GM23248 (cell line): ENCODE measurements at regions of chr18 and their contacts with region 1.

Region 1: DNA sequence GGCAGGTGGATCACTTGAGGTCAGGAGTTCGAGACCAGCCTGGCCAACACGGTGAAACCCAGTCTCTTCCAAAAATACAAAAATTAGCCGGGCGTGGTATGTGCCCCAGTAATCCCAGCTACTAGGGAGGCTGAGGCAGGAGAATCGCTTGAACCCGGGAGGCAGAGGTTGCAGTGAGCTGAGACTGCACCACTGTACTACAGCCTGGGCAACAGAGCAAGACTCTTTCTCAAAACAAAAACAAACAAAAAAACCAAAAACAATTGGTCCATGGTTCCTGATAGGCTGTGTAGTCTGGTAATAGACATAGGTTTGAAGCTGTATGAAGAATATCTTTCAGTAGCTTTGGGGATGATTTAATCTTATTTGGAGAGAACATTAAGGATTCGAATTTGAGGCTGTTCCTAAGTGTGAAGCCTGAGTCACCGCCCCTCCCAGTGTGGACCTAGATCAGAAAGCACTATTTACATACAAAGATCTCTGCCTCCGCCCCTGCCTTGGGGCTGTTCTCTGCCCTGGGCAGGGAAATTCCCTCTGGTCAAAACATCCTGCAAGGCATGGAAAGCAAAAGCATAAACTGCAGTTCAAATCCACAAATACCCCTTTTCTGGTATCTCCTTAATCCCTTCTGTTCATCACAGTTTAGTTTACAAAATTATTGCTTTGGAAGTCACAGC is 52.8 kb upstream of the PMAIP1 start:
- DNase-seq: peak; percentile 49
- H3K4me3 ChIP-seq: no peak overlapping the region
- H3K27ac ChIP-seq: no peak overlapping the region
- H3K4me1 ChIP-seq: peaks cover 4% of the 10 kb centered on the region; the same call in 1 of the 2 replicates
- H3K27me3 ChIP-seq: no peaks in the 10 kb centered on the region

Region 2: DNA sequence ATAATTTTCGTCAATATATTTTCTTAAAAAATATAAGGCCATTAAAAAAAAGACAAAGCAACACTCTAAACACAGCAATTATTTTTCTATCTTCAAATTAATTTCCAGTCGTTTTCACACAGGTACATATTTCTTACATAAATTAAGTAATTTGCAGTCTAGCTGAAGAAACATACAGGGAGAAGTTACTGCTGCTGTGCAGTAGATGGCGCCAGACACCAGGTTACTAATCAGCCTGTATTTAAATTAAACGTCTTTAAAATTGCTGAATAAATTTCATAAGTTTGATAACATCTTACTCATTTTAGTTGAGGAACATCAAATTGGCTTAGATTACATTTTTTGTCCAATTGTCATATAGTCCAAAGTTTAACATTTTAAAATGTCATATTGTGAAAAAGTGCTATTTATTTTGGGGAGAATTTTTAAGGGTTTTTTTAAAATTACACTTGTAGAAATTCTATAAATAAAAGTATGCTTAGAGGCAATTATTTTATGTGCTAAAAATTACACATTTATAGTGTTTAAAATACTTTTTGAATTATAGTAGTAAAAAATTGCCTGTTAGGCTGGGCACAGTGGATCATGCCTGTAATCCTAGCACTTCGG is 141.2 kb after region 1 on chr18:
- in situ Hi-C with region 1: loop called (anchors 10 kb)
- DNase-seq: peak; percentile 65
- H3K4me3 ChIP-seq: no peak overlapping the region
- H3K27ac ChIP-seq: no peak overlapping the region
- H3K4me1 ChIP-seq: no peaks in the 10 kb centered on the region
- H3K27me3 ChIP-seq: no peaks in the 10 kb centered on the region

Region 3: GRCh38 chr18:60421356-60422118 is 574.6 kb after region 1 on chr18:
- in situ Hi-C with region 1: no loop called
- DNase-seq: peak; percentile 1
- H3K4me3 ChIP-seq: no peak overlapping the region
- H3K27ac ChIP-seq: no peak overlapping the region
- H3K4me1 ChIP-seq: peaks cover 5% of the 10 kb centered on the region; the same call in 1 of the 2 replicates
- H3K27me3 ChIP-seq: no peaks in the 10 kb centered on the region

Region 4: GRCh38 chr18:60831971-60832370 is 985.0 kb after region 1 on chr18:
- in situ Hi-C with region 1: no loop called
- DNase-seq: no peak
- H3K4me3 ChIP-seq: no peak overlapping the region
- H3K27ac ChIP-seq: no peak overlapping the region
- H3K4me1 ChIP-seq: no peaks in the 10 kb centered on the region
- H3K27me3 ChIP-seq: no peaks in the 10 kb centered on the region